Right ventricle myocardium inferior (tissue), 1 donor: ENCODE measurements at regions of chr17 and their contacts with region 1.

Region 1: GRCh38 chr17:32783602-32784001 is 93.3 kb downstream of the MYO1D start:
- DNase-seq: no peak
- ATAC-seq: no peak

Region 2: DNA sequence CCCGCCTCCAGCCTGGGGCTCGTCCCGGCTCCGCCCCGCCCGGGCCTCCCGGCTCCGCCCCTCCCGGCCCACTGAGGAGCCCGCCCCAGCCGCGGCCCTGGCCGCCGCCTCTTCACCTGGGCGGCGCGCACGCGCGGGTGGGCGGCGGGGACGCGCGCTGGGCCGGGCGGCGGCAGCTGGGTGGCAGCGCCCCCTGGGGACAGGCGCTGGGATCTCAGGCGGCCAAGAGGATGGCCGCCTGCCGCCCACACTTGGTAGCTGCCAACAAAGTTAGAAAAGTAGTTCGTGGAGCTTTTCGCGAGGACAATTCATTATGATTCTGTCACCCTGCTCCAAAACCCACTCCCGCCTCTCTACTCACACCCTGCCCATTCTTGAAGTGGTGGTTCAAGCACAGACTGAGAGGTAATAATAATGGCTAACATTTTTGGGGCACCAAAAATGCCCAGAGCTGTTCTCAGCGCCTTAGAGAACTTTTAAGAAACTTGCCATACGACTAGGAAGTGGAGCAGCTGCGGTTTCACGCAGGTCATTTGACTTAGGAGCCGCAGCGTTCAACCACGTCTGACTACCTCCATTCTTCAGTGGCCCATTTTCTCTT is 93.7 kb after region 1 on chr17:
- intact Hi-C with region 1: loop called (anchors 1 kb)
- DNase-seq: peak; percentile 96
- ATAC-seq: peak; percentile 100

Region 3: DNA sequence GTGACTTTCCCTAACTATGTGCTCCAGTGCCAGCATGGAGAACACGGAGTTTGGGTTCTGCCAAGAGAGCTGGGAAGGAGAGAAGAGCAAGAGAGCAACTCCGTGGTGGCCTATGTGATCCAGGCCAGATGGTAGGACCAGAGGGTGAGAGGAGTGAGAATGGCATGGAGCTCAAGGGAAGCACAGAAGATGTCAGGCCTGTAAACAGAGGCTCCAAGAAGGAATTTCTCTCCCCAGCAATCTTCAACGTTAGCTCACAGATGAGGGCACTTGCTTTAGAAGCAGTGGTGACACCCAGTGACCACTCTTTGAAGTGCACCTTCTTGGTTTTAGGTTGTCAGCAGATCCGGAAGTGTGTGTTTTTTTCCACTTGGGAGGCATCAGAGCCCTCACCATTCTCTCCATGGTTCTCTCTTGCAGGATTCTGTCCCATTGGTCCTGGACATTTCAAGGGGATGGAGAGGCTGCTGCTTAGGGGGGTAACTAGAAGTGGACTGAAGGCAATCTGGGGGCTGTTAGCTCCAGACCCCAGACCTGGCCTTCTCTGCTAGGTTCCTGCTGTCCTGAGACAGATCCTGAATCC is 126.3 kb after region 1 on chr17:
- intact Hi-C with region 1: loop called (anchors 2 kb)
- DNase-seq: no peak
- ATAC-seq: peak; percentile 76

Region 4: GRCh38 chr17:32936894-32937500 is 153.4 kb after region 1 on chr17:
- intact Hi-C with region 1: loop called (anchors 5 kb)
- DNase-seq: peak; percentile 79
- ATAC-seq: peak; percentile 79

Region 5: GRCh38 chr17:32997753-32998632 is 214.4 kb after region 1 on chr17:
- intact Hi-C with region 1: loop called (anchors 5 kb)
- DNase-seq: peak; percentile 84
- ATAC-seq: peak; percentile 52